ENCODE measurements at regions of chr3 and their contacts with region 1.

Region 1: GRCh38 chr3:171055336-171056178 is 29.0 kb upstream of the SLC2A2 start:
- DNase-seq: peak; percentile 95
- ATAC-seq: peak; percentile 95
- H3K4me3 ChIP-seq: no peak overlapping the region
- H3K27ac ChIP-seq: peak overlapping the region; percentile 68
- H3K4me1 ChIP-seq: peaks cover 79% of the 10 kb centered on the region
- H3K27me3 ChIP-seq: no peaks in the 10 kb centered on the region
- CTCF ChIP-seq: no peak
- EP300 ChIP-seq: peak in 1 of 2 experiments; percentile 83; a peak in 2 of 4 replicates
- POLR2A ChIP-seq: no peak
- RAD21 ChIP-seq: no peak

Region 2: DNA sequence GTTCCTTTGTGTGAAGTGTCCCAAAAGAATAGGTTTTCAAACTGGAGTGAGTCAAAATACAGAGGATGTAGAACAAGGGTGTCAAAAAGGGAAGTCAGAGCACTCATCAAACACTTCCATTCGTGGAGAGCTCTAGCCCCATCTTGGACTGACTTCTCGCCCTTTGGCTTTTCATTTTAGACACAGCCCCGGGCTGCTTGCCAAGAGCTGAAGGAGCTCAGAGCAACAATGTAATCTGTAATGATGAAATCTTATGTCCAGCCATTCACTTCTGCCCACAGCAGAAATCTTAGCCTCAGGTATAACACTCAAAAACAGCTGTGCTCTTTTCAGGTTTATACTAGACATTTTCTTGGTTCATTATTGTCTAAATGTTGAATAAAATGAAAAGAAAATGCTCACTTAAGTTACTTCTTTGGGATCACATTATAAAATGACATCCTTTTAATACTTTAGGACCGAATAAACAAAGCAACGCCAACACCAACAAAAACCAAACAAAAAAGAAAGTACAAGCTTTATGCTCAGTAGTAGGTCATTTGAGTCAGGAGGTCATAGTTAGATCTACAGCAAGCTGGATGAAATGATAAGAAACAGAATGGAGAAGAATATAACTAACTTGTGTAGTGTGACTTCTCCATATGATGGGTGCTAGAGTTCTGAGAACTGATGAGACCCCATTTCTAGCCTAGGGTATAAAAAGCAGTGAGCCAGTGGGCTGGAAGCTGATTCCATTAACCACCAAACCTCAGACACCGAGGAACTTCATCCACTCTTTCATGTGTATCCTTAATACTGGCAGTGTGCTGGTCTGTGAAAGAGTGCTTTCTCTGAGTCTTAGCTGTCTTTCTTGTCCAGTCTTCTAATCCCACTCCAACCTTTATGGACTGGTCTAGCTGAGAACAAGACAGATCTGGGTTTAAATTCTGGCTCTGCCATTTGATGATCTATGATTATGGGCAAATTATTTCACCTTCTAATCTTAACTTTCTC is 337.9 kb before region 1 on chr3:
- CTCF ChIA-PET with region 1: no interaction called
- POLR2A ChIA-PET with region 1: no interaction called
- in situ Hi-C with region 1: no loop called
- intact Hi-C with region 1: no loop called
- DNase-seq: no peak
- ATAC-seq: no peak
- H3K4me3 ChIP-seq: no peak overlapping the region
- H3K27ac ChIP-seq: no peak overlapping the region
- H3K4me1 ChIP-seq: no peaks in the 10 kb centered on the region
- H3K27me3 ChIP-seq: no peaks in the 10 kb centered on the region
- CTCF ChIP-seq: no peak
- EP300 ChIP-seq: no peak
- POLR2A ChIP-seq: no peak
- RAD21 ChIP-seq: no peak

Region 3: DNA sequence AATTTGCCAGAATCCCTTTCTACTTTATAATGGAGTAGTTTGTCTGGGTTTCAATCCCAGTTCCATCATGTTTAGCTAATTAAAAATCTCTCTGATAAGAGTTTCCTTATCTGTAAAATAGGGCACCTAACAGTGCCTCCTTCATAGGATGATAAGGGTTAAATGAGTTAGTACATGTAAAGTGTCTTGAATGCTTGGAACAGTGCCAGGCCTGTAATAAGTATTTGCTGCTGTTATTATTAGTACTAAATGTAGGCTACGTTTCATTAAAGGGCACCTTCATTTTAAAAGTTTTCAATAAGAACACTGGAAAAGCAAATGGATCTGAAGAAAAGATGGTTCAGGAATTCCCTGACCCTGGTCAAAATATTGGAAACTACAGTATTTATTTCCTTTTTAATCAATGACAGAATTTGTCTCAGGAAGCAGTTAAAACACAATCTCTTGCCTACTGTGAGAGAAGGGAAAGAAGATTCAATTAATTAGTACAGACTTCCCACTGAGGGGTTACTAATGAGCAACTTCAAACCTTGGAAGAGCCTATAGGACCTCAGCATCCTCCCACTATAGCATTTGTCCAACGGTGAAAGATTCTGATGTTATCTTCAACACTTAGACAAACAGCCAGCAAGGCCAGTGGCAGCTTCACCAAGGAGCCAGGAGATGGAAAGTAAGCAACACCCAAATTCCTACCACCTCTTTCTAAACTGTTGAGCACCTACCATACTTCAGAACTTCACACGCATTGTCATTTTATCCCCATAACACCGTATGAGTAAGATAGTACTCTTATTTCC is 17.0 kb before region 1 on chr3:
- CTCF ChIA-PET with region 1: no interaction called
- POLR2A ChIA-PET with region 1: no interaction called
- in situ Hi-C with region 1: no loop called
- intact Hi-C with region 1: no loop called
- DNase-seq: no peak
- ATAC-seq: no peak
- H3K4me3 ChIP-seq: no peak overlapping the region
- H3K27ac ChIP-seq: no peak overlapping the region
- H3K4me1 ChIP-seq: peaks cover 20% of the 10 kb centered on the region
- H3K27me3 ChIP-seq: no peaks in the 10 kb centered on the region
- CTCF ChIP-seq: no peak
- EP300 ChIP-seq: no peak
- POLR2A ChIP-seq: no peak
- RAD21 ChIP-seq: no peak

Region 4: GRCh38 chr3:171092467-171092911 is 36.9 kb after region 1 on chr3:
- CTCF ChIA-PET with region 1: no interaction called
- POLR2A ChIA-PET with region 1: no interaction called
- in situ Hi-C with region 1: no loop called
- intact Hi-C with region 1: loop called (anchors 5 kb)
- DNase-seq: peak; percentile 88
- ATAC-seq: peak; percentile 91
- H3K4me3 ChIP-seq: no peak overlapping the region
- H3K27ac ChIP-seq: peak overlapping the region; percentile 77
- H3K4me1 ChIP-seq: peaks cover 56% of the 10 kb centered on the region
- H3K27me3 ChIP-seq: no peaks in the 10 kb centered on the region
- CTCF ChIP-seq: no peak
- EP300 ChIP-seq: peak in 1 of 2 experiments; percentile 91; a peak in 2 of 4 replicates
- POLR2A ChIP-seq: no peak
- RAD21 ChIP-seq: no peak

Region 5: GRCh38 chr3:171200052-171200749 is 144.6 kb after region 1 on chr3:
- CTCF ChIA-PET with region 1: no interaction called
- POLR2A ChIA-PET with region 1: no interaction called
- in situ Hi-C with region 1: no loop called
- intact Hi-C with region 1: no loop called
- DNase-seq: no peak
- ATAC-seq: no peak
- H3K4me3 ChIP-seq: no peak overlapping the region
- H3K27ac ChIP-seq: no peak overlapping the region
- H3K4me1 ChIP-seq: no peaks in the 10 kb centered on the region
- H3K27me3 ChIP-seq: no peaks in the 10 kb centered on the region
- CTCF ChIP-seq: no peak
- EP300 ChIP-seq: no peak
- POLR2A ChIP-seq: no peak
- RAD21 ChIP-seq: no peak

Region 6: DNA sequence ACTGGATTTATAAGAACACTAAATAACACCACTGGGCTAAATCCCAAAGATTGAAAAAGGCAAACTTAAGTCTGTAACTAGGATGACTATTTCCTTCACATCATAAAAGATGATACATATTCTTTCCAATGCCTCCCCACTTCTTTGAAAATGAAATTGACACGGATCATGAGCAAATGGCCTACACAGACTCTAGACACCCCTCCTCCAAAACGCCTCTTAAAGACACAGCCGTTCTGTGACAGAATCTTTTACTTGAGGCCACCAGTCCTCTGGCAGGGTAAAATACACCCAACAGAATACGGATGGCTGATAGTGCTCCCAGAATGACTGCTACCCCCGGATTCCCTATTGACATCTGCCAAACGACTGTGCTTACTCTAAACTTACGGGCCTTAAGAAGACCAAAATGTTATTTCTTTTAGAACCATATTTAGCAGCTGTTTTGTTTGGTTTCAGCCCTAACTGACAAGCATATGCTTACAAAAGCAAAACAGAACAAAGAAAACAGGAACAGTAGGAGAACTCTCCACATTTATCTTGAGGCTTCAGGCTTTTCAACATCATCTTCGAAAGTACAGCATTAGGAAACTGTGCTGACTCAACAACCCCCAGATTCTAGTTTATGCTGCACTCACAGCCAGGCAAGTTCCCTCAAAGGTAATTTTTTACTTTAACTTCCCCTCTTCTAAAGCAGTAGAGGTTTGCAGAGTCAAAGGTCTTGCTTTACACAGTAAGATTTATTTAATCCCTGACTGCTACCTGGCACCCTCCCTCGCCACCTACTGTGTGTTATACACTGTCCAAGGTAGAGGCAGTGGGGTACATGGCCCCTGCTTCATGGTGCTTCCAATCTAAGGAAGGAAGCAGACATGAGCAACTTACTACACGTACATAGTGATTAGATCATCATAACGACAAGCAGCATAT is 320.4 kb after region 1 on chr3:
- CTCF ChIA-PET with region 1: no interaction called
- POLR2A ChIA-PET with region 1: no interaction called
- in situ Hi-C with region 1: no loop called
- intact Hi-C with region 1: no loop called
- DNase-seq: no peak
- ATAC-seq: no peak
- H3K4me3 ChIP-seq: no peak overlapping the region
- H3K27ac ChIP-seq: no peak overlapping the region
- H3K4me1 ChIP-seq: no peaks in the 10 kb centered on the region
- H3K27me3 ChIP-seq: no peaks in the 10 kb centered on the region; a peak in 1 of 5 replicates
- CTCF ChIP-seq: no peak
- EP300 ChIP-seq: no peak
- POLR2A ChIP-seq: no peak
- RAD21 ChIP-seq: no peak

Measured in HepG2 (cell line).